Endothelial cell of umbilical vein (primary cell): ENCODE measurements at regions of chr15 and their contacts with region 1.

Region 1: GRCh38 chr15:55434989-55435825 is 26.9 kb downstream of the PIERCE2 start:
- DNase-seq: peak; percentile 83
- H3K4me3 ChIP-seq: no peak overlapping the region
- H3K27ac ChIP-seq: no peak overlapping the region
- H3K4me1 ChIP-seq: no peaks in the 10 kb centered on the region
- H3K27me3 ChIP-seq: no peaks in the 10 kb centered on the region
- CTCF ChIP-seq: peak; percentile 47 to 59
- POLR2A ChIP-seq: no peak

Region 2: DNA sequence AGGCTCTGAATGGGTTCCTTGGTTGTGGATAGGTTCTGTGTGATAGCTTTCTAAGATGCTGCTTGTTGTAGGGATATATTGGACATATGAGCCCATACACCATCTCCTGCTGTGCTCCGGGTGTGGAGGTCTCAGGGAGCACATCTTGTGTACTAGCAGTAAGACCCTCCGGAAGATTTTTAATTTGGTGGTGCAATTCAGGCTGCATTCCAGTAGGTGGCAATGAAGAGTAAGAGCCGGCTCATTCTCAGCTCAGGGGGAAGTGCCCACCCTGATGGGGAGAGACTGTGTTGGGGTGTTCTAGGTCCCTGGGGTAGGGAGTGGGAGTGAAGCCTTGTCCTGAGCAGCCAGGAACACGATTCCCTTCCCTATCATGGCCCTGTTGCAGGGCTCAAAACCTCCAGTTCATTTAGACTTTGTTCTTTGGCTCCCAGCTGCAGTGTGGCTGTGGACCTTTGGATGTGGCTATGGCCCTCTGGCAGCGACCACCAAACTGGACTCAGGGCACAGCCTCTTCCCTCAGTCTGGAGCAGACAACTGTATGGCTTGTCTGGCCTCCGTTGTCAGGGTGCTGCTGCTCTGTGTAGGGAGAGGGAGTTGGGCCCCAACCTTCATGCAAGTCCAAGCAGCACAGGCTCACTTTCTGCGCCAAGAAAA is 1352.2 kb before region 1 on chr15:
- CTCF ChIA-PET with region 1: no interaction called
- POLR2A ChIA-PET with region 1: no interaction called
- dilution Hi-C with region 1: no loop called
- intact Hi-C with region 1: loop called (anchors 5 kb)
- DNase-seq: peak; percentile 17
- H3K4me3 ChIP-seq: no peak overlapping the region
- H3K27ac ChIP-seq: no peak overlapping the region
- H3K4me1 ChIP-seq: no peaks in the 10 kb centered on the region
- H3K27me3 ChIP-seq: no peaks in the 10 kb centered on the region
- CTCF ChIP-seq: peak; percentile 64 to 74
- POLR2A ChIP-seq: no peak

Region 3: GRCh38 chr15:55196458-55197361 is 238.5 kb before region 1 on chr15 and contains the start of gene RSL24D1:
- CTCF ChIA-PET with region 1: interaction called, 12 read pairs
- POLR2A ChIA-PET with region 1: interaction called, 3 read pairs
- dilution Hi-C with region 1: no loop called
- intact Hi-C with region 1: no loop called
- DNase-seq: peak; percentile 99
- H3K4me3 ChIP-seq: peak within 1 kb of the TSS; percentile 85 to 97 (median 97)
- H3K27ac ChIP-seq: peak within 1 kb of the TSS; percentile 89
- H3K4me1 ChIP-seq: peaks cover 16% of the 10 kb centered on the region
- H3K27me3 ChIP-seq: no peaks in the 10 kb centered on the region
- CTCF ChIP-seq: peak; percentile 9 to 38
- POLR2A ChIP-seq: peak; percentile 94
- total RNA-seq, gene RSL24D1: 58.2 and 60.0 TPM in 2 replicates

Region 4: DNA sequence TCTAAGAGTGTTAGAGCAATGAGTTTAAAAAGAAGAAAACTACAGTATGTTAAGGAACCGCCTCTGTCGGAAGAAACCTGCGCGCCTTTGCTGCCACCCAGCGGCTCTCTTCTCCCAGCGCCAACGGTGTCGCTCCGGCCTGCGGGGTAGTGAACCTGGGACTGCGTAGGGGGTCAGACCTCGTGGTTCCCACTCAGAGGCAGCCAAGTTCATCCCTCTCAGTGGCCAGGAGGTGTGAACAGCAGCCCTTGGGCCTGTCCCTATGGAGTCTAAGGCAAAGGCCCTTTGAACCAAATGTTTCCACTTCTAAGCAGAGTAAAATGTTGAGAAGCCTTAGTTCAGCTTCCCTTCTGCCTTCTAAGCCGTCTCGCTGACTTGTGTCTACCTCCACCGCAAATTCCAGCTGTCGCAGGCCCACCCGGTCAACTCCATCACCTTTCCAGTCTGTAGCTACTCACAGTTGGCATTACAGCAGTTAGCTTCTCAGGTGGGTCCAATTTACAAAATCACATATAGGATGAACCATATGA is 144.6 kb before region 1 on chr15:
- CTCF ChIA-PET with region 1: interaction called, 19 read pairs
- POLR2A ChIA-PET with region 1: no interaction called
- dilution Hi-C with region 1: no loop called
- intact Hi-C with region 1: loop called (anchors 1 kb)
- DNase-seq: peak; percentile 86
- H3K4me3 ChIP-seq: peak overlapping the region; percentile 63 to 97 (median 85)
- H3K27ac ChIP-seq: peak overlapping the region; percentile 60
- H3K4me1 ChIP-seq: peaks cover 10% of the 10 kb centered on the region
- H3K27me3 ChIP-seq: no peaks in the 10 kb centered on the region
- CTCF ChIP-seq: peak; percentile 87 to 96
- POLR2A ChIP-seq: no peak

Region 5: GRCh38 chr15:55357774-55358173 is 77.4 kb before region 1 on chr15:
- CTCF ChIA-PET with region 1: interaction called, 10 read pairs
- POLR2A ChIA-PET with region 1: no interaction called
- dilution Hi-C with region 1: no loop called
- intact Hi-C with region 1: no loop called
- DNase-seq: peak; percentile 64
- H3K4me3 ChIP-seq: no peak overlapping the region
- H3K27ac ChIP-seq: no peak overlapping the region
- H3K4me1 ChIP-seq: peaks cover 13% of the 10 kb centered on the region
- H3K27me3 ChIP-seq: no peaks in the 10 kb centered on the region
- CTCF ChIP-seq: no peak
- POLR2A ChIP-seq: no peak

Region 6: DNA sequence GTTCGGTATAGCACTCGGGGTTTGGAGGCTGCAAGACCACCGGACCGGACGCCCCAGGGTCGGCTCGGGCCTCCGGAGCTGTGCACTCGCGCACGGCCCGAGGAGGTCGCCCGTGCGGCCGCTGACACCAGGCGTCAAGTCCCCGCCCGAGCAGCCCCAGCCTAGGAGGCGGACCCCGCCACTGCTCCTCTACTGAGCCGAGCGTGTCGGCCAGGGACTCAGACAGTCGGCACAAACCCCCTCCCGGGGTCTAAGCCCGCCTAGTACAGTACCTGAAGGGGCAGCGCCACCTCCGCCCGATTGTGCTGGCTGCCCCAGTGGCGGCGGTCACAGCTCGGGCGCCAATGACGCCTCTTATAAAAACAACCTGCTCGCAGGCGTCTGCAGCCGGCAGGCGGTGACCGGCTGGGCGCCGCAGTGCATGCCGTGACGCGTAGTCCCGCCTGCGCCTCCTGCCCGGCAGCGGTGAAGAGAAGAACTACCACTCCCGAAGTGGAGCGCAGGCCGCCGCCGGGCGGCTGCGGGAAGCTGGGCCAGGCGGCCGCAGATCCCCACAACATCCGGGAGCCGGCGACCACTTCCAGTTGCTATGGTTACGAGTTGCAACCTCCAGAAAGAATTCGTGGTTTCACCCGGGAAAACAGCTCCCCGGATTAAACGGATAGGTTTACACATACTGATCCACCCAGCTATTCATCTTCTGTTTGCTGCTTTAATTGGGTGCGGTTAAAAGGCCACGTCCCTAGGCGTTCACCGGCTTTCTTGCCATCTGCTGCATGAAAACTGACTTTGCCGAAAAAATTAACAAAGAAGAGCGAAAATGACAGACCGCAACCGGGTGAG is 27.0 kb before region 1 on chr15 and contains the starts of genes CCPG1 and PIERCE2:
- CTCF ChIA-PET with region 1: interaction called, 13 read pairs
- POLR2A ChIA-PET with region 1: no interaction called
- dilution Hi-C with region 1: no loop called
- intact Hi-C with region 1: loop called (anchors 2 kb)
- DNase-seq: peak; percentile 96
- H3K4me3 ChIP-seq: peak within 1 kb of the TSS; percentile 81 to 97 (median 96)
- H3K27ac ChIP-seq: peak within 1 kb of the TSS; percentile 93
- H3K4me1 ChIP-seq: peaks cover 21% of the 10 kb centered on the region
- H3K27me3 ChIP-seq: no peaks in the 10 kb centered on the region
- CTCF ChIP-seq: peak; percentile 56 to 79
- POLR2A ChIP-seq: peak; percentile 67
- total RNA-seq, gene CCPG1: 58.5 and 59.5 TPM in 2 replicates
- total RNA-seq, gene PIERCE2: 1.9 and 2.3 TPM in 2 replicates

Region 7: GRCh38 chr15:55457401-55458022 is 22.3 kb after region 1 on chr15:
- CTCF ChIA-PET with region 1: interaction called, 11 read pairs
- POLR2A ChIA-PET with region 1: no interaction called
- dilution Hi-C with region 1: no loop called
- intact Hi-C with region 1: no loop called
- DNase-seq: no peak
- H3K4me3 ChIP-seq: no peak overlapping the region
- H3K27ac ChIP-seq: no peak overlapping the region
- H3K4me1 ChIP-seq: no peaks in the 10 kb centered on the region
- H3K27me3 ChIP-seq: no peaks in the 10 kb centered on the region
- CTCF ChIP-seq: no peak
- POLR2A ChIP-seq: no peak